ENCODE measurements at regions of chr16 and their contacts with region 1.

Region 1: DNA sequence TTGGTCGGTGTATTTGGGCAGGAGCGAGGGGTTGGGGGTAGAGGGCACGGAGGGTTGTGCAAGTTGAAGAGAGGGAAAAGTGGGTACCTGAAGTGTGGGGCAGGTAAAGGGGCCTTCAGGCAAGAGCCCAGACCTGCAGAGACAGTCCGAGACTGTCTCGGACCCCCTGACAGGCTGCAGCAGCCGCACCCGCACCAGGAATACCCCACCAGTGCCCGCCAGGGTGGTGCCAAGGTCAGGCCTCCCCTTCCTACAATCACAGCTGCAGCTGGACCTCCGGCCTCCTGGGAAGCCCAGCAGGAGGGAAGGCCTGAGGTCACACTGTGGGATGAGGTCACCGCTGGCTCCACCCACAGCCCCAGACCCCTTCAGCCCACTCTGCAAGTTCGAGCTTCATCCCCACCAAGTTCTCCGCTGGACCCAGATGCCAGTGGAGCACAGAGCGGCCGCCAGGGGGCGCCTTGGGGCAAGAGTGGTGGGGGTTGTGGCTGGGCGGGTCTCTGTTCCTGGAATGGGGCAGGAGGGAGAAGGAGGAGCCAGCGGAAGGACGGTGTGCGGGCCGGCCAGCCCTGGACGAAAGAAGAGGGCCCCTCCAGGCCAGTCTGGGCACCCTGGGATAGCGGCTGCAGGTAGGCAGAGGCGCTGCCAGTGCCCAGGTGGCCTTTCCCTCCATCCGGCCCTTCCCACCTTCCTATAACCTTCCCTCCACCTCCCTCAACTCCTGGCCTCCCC is at the start of gene HSD3B7:
- DNase-seq: peak; percentile 98
- H3K4me3 ChIP-seq: peak within 1 kb of the TSS; percentile 31 to 52; a peak in 3 of 4 replicates
- H3K27ac ChIP-seq: peak within 1 kb of the TSS; percentile 19 to 58; a peak in 1 of 4 replicates
- H3K4me1 ChIP-seq: peaks cover 5 to 8% of the 10 kb centered on the region in 2 experiments; a peak in 2 of 4 replicates
- H3K27me3 ChIP-seq: no peaks in the 10 kb centered on the region
- CTCF ChIP-seq: peak; percentile 86
- EP300 ChIP-seq: no peak; a peak in 1 of 4 replicates
- RAD21 ChIP-seq: peak; percentile 81
- polyA plus RNA-seq, gene HSD3B7: 12.2 and 12.9 TPM in 2 replicates

Region 2: DNA sequence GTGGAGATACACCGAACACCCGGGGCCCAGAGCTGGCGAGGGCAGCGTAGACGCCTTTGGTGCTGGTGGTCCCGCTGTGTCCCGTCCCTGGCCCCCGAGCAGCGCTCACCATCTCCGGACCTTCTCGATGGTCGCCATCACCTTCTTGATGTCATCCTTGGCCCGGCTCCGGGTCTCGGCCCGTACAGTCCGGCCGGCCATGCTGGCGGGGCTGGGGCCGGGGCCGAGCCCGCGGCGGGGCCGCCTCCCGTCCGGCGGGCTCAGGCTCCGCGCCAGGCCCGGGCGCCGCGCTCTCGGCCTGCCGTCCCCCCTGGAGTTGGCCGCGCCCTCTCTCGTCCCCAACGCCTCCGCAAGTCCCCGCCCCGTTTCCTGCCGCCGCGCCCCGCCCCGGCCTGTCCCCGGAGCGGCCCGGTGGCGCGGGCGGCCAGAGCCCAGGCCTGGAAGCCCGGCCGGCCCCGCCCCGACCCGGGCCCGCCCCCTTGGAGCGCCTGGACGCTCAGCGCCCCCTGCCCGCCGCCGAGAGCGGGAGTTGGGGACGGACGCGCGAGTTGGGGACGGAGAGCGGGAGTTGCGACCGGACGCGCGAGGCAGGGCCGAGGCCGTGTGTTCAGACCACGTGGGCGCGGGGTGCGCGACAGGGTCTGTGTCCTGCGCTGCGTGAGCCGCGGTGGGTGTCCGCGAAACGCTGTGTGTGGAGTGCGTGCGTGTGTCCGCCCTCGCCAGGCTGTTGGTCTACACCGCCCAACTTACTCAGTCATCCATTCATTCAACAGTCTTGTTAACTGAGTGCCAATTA is 90.9 kb before region 1 on chr16 and contains the start of gene BCL7C:
- CTCF ChIA-PET with region 1: no interaction called
- POLR2A ChIA-PET with region 1: no interaction called
- DNase-seq: peak; percentile 96
- H3K4me3 ChIP-seq: peak within 1 kb of the TSS; percentile 75 to 88
- H3K27ac ChIP-seq: peak within 1 kb of the TSS; percentile 77 to 99
- H3K4me1 ChIP-seq: peaks cover 12 to 29% of the 10 kb centered on the region in 2 experiments; a peak in 3 of 4 replicates
- H3K27me3 ChIP-seq: no peaks in the 10 kb centered on the region
- CTCF ChIP-seq: peak; percentile 47
- EP300 ChIP-seq: no peak
- RAD21 ChIP-seq: 0 out of 2 replicates have a peak, but pooled peaks have one; percentile 18
- polyA plus RNA-seq, gene BCL7C: 48.5 and 56.3 TPM in 2 replicates

Region 3: GRCh38 chr16:30934827-30935557 is 49.8 kb before region 1 on chr16:
- CTCF ChIA-PET with region 1: no interaction called
- POLR2A ChIA-PET with region 1: no interaction called
- DNase-seq: peak; percentile 64
- H3K4me3 ChIP-seq: no peak overlapping the region
- H3K27ac ChIP-seq: no peak overlapping the region
- H3K4me1 ChIP-seq: no peaks in the 10 kb centered on the region
- H3K27me3 ChIP-seq: no peaks in the 10 kb centered on the region
- CTCF ChIP-seq: peak; percentile 62
- EP300 ChIP-seq: no peak
- RAD21 ChIP-seq: peak; percentile 37

Region 4: GRCh38 chr16:30958175-30959079 is 26.4 kb before region 1 on chr16:
- CTCF ChIA-PET with region 1: interaction called, 10 read pairs
- POLR2A ChIA-PET with region 1: interaction called, 4 read pairs
- DNase-seq: peak; percentile 93
- H3K4me3 ChIP-seq: peak overlapping the region; percentile 68 to 74
- H3K27ac ChIP-seq: peak overlapping the region; percentile 38 to 98; a peak in 3 of 4 replicates
- H3K4me1 ChIP-seq: peaks cover 0 to 21% of the 10 kb centered on the region in 2 experiments; a peak in 1 of 4 replicates
- H3K27me3 ChIP-seq: no peaks in the 10 kb centered on the region
- CTCF ChIP-seq: no peak
- EP300 ChIP-seq: no peak
- RAD21 ChIP-seq: no peak

Region 5: DNA sequence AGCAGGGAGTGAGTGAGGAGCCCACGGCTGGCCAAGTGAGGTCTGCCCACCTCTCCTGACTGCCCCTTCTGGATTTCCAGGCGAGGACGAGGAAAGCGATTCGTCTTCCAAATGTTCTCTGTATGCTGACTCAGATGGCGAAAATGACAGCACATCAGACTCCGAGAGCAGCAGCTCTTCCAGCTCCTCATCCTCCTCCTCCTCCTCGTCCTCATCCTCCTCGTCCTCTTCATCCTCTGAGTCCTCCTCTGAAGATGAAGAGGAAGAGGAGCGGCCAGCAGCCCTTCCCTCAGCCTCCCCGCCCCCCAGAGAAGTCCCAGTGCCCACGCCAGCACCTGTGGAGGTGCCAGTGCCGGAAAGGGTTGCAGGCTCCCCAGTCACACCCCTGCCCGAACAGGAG is 13.5 kb before region 1 on chr16:
- CTCF ChIA-PET with region 1: interaction called, 21 read pairs
- POLR2A ChIA-PET with region 1: interaction called, 3 read pairs
- DNase-seq: no peak
- H3K4me3 ChIP-seq: no peak overlapping the region
- H3K27ac ChIP-seq: no peak overlapping the region
- H3K4me1 ChIP-seq: no peaks in the 10 kb centered on the region
- H3K27me3 ChIP-seq: no peaks in the 10 kb centered on the region
- CTCF ChIP-seq: no peak
- EP300 ChIP-seq: no peak
- RAD21 ChIP-seq: no peak

Region 6: DNA sequence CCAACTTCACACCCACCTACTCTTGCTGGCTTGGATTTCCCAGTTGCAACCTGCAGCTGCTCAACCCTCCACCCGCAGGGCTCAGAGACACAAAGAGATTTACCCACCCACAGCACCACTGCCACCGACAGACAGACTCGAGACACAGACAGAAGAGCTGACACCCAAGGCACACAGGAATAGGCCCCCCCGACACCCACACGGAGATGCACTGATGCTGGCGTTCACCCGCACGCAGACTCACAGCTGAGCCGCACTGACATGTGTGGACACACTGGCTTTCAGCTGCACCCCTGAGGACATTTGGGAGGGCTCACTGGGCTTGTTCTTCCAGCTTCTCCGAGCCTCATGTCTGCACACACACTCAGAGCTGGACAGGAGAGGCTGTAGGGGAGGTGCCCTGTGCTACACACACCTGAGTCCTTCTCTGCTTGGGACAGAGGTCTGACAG is 17.4 kb after region 1 on chr16:
- CTCF ChIA-PET with region 1: interaction called, 16 read pairs
- POLR2A ChIA-PET with region 1: interaction called, 5 read pairs
- DNase-seq: no peak
- H3K4me3 ChIP-seq: no peak overlapping the region
- H3K27ac ChIP-seq: no peak overlapping the region
- H3K4me1 ChIP-seq: peaks cover 14 to 18% of the 10 kb centered on the region in 2 experiments; a peak in 3 of 4 replicates
- H3K27me3 ChIP-seq: no peaks in the 10 kb centered on the region
- CTCF ChIP-seq: no peak
- EP300 ChIP-seq: no peak
- RAD21 ChIP-seq: no peak

Region 7: GRCh38 chr16:31440516-31441184 is 455.8 kb after region 1 on chr16:
- CTCF ChIA-PET with region 1: interaction called, 37 read pairs
- POLR2A ChIA-PET with region 1: no interaction called
- DNase-seq: no peak
- H3K4me3 ChIP-seq: no peak overlapping the region
- H3K27ac ChIP-seq: peak overlapping the region in 1 of 2 experiments; percentile 51; a peak in 1 of 4 replicates
- H3K4me1 ChIP-seq: peaks cover 0 to 5% of the 10 kb centered on the region in 2 experiments; a peak in 1 of 4 replicates
- H3K27me3 ChIP-seq: no peaks in the 10 kb centered on the region
- CTCF ChIP-seq: no peak
- EP300 ChIP-seq: no peak
- RAD21 ChIP-seq: no peak

Measured in SK-N-SH (cell line).